Posterior vena cava (tissue), 2 donors: ENCODE measurements at regions of chr20 and their contacts with region 1.

Region 1: GRCh38 chr20:36754656-36755222 is 8.8 kb upstream of the NDRG3 start:
- DNase-seq: no peak

Region 2: GRCh38 chr20:36550797-36551299 is 203.9 kb before region 1 on chr20:
- intact Hi-C with region 1: loop called in 1 of 2 experiments (anchors 10 kb)
- DNase-seq: no peak

Region 3: GRCh38 chr20:36605399-36606157 is 149.2 kb before region 1 on chr20 and contains the start of gene RAB5IF:
- intact Hi-C with region 1: loop called in 1 of 2 experiments (anchors 10 kb)
- DNase-seq: peak; percentile 100
- total RNA-seq, gene RAB5IF: 50.0 to 56.0 TPM

Region 4: DNA sequence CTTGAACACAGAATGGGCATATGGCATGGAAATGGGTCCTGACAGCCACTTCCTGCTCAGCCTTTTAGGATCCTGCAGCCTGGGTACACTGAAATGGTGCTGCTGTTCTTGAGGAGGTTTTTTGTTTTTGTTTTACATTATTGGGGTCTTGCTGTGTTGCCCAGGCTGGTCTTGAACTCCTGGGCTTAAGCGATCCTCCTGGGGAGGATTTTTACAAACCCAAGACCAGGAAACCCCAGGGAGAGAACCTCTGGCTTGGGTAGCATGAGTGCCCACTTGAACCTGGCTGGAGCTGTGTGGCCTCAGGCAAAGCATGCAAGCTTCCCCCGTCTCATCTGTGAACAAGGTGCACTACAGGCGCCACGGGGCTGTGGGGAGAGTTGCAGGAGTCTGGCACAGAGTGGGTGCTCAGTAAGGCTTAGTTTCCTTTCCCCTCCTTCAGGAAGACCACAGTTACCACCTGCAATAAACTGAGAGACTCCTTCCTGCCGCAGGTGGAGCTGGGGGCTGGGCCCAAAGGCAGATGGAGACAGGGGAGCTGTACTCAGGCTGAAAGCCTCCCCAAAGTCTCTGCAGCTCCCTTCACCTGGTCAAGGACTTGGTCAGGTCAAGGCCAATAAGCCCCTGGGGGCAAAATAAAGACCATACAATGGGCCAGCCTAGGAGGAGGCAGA is 110.6 kb before region 1 on chr20:
- intact Hi-C with region 1: no loop called
- DNase-seq: peak; percentile 47

Region 5: DNA sequence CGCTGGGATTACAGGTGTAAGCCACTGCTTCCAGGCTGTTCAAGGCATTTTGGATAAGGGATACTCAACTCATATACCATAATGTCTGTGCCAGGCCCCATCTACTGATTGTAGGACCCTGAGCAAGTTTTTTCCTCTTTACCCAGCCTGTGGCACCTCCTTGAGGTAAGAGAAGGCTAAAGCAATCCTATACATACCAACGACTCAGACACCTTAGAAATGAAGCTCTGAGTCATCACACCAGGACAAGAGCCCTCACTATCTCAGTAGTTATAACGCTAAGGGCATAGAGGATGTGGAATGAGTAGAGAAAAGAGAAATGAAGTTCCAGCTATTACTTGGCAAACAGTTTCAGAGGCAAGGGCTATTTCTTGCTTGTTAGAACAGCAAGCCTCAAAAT is 25.8 kb before region 1 on chr20:
- intact Hi-C with region 1: loop called in 1 of 2 experiments (anchors 2 kb)
- DNase-seq: no peak